Activated B cell treated with CpG ODN at 0.5 μM for 24 hours (primary cell): ENCODE measurements at regions of chr7 and their contacts with region 1.

Region 1: GRCh38 chr7:1586126-1587022 is 16.5 kb upstream of the PSMG3 start:
- DNase-seq: no peak
- ATAC-seq: no peak
- H3K4me3 Mint-ChIP-seq: no peak overlapping the region
- H3K27ac Mint-ChIP-seq: no peak overlapping the region
- H3K4me1 Mint-ChIP-seq: peaks cover 11% of the 10 kb centered on the region
- H3K27me3 Mint-ChIP-seq: peaks cover 10% of the 10 kb centered on the region
- CTCF ChIP-seq: no peak

Region 2: DNA sequence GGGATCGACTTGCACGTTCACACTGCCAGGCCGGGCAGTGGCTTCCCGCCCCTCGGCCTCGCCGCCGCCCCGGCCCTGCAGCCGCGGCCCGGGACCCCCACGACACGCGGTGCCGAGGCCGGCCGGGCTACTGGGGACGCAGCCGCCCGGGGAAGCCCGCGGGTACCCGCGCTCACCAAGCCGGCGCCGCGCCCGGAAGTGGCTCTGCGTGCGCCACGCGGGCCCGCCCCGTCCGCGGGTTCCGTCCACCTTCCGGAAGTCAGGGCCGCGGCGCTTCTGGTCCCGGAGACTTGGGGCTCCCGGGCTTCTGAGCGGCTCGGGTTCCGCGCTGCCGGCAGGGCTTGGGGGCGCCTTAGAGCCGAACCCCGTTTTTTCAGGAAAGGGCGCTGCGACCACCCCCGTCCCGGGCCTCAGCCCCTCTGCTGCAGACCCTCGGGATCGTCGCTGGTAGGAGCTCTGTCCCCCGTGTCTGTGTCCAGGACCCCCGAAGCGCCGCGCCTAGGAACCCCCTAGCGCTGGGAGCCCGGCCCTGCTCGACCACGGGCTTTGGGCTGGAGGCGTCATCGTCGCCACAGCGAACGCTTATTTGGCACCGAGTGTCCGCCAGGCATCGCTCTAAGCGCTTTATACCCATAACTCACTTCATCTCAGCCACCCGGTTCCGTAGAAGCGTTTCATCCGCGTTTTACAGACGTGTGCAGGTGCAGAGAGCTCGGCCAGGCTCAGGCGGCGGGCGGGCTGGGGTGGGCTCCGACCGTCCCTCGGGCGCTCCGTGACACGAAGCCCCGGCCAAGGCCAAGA is 16.3 kb before region 1 on chr7 and contains the start of gene PSMG3:
- CTCF ChIA-PET with region 1: interaction called, 3 read pairs
- POLR2A ChIA-PET with region 1: interaction called, 10 read pairs
- intact Hi-C with region 1: no loop called
- DNase-seq: peak; percentile 91
- ATAC-seq: peak; percentile 90
- H3K4me3 Mint-ChIP-seq: peak within 1 kb of the TSS; percentile 86
- H3K27ac Mint-ChIP-seq: peak within 1 kb of the TSS; percentile 88
- H3K4me1 Mint-ChIP-seq: peaks cover 26% of the 10 kb centered on the region
- H3K27me3 Mint-ChIP-seq: no peaks in the 10 kb centered on the region
- CTCF ChIP-seq: no peak
- total RNA-seq, gene PSMG3: 29.5 and 30.5 TPM in 2 replicates